Mammary epithelial cell (primary cell): ENCODE measurements at regions of chr15 and their contacts with region 1.

Region 1: GRCh38 chr15:89750560-89751542 is at the start of gene MESP1:
- DNase-seq: peak; percentile 85
- H3K4me3 ChIP-seq: peak within 1 kb of the TSS; percentile 44 to 65 (median 58)
- H3K27ac ChIP-seq: no peak within 1 kb of the TSS
- H3K4me1 ChIP-seq: peaks cover 16% of the 10 kb centered on the region
- H3K27me3 ChIP-seq: no peaks in the 10 kb centered on the region
- CTCF ChIP-seq: peak; percentile 42 to 79
- total RNA-seq, gene MESP1: under 0.01 TPM in 1 of 2 donors, not detected in the other

Region 2: DNA sequence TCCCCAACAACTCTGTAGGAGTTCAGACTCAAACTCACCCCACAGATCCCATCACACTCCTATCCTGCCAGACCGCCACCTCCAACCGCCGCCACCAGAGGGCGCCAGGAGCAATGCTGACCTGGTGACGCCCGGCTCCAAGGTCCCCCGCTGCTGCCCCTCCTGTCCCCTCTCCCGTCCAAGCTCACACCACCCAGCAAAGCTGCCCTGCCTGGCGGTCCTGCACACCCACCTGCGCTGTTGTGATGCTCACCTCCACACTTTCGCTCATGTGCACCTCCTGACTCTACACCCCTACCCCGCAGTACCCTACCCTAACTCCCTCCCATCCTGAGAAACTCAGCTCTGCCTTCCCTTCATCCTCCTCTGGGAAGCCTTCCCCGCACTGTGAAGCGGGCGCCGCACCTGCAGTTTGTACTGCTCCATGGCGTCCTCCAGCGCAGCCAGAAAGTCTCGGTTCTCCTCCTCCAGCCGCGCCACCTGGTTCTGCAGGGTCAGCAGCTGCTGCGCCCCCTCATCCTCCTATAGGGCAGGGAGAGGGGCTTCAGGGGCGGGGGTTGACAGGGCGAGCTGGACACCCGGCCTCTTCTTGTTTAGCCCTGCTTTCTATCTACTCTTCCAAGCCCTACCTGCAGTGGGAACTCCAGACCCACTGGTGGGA is 103.5 kb before region 1 on chr15:
- CTCF ChIA-PET with region 1: no interaction called
- dilution Hi-C with region 1: no loop called
- in situ Hi-C with region 1: no loop called
- intact Hi-C with region 1: loop called (anchors 1 kb)
- DNase-seq: peak; percentile 23
- H3K4me3 ChIP-seq: no peak overlapping the region
- H3K27ac ChIP-seq: no peak overlapping the region
- H3K4me1 ChIP-seq: no peaks in the 10 kb centered on the region
- H3K27me3 ChIP-seq: no peaks in the 10 kb centered on the region
- CTCF ChIP-seq: peak; percentile 80 to 92

Region 3: DNA sequence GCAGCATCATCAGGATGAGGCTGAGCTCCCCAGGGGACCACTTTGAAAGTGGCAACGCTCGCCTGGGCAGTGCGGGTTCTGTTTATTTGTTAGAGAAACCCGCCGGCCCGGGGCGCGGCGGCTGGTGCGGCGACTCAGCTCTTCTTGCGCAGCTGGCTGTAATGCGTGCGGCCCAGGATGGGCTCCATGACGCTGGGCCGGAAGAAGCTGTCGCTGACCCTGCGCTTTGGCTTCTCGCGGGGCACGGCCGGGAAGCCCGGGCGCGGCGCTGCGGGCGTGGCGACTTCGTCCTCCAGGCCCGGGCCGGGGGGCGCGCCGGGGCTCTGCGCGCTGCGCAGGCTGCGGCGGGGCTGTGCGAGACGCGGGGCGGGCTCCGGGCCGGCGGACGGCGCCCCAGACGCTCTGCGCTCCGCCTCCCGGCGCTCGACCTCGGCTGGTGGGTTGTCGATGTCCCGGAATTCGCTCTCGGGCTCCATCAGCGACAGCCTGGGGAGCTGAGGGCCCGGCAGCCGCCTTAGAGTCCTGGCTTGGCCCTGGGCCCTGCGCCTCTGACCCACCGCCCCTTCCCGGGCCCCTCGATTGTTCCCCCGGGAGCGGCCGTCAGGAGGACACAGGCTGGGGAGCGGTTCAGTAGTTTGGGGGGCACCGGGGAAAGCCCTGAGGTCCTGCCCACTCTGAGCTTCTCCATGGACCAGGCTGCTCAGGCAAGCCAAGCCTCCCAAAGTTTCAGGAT is 85.2 kb before region 1 on chr15:
- CTCF ChIA-PET with region 1: no interaction called
- dilution Hi-C with region 1: no loop called
- in situ Hi-C with region 1: no loop called
- intact Hi-C with region 1: no loop called
- DNase-seq: no peak
- H3K4me3 ChIP-seq: peak overlapping the region in 2 of 3 experiments; percentile 26 to 35
- H3K27ac ChIP-seq: no peak overlapping the region
- H3K4me1 ChIP-seq: peaks cover 24% of the 10 kb centered on the region
- H3K27me3 ChIP-seq: no peaks in the 10 kb centered on the region
- CTCF ChIP-seq: no peak

Region 4: GRCh38 chr15:89690276-89691218 is 60.3 kb before region 1 on chr15 and contains the starts of genes PEX11A and WDR93:
- CTCF ChIA-PET with region 1: no interaction called
- dilution Hi-C with region 1: no loop called
- in situ Hi-C with region 1: no loop called
- intact Hi-C with region 1: no loop called
- DNase-seq: peak; percentile 76
- H3K4me3 ChIP-seq: peak within 1 kb of the TSS; percentile 78 to 82 (median 81)
- H3K27ac ChIP-seq: peak within 1 kb of the TSS; percentile 21
- H3K4me1 ChIP-seq: no peaks in the 10 kb centered on the region
- H3K27me3 ChIP-seq: no peaks in the 10 kb centered on the region
- CTCF ChIP-seq: no peak
- total RNA-seq, gene PEX11A: 4.3 to 7.3 TPM
- total RNA-seq, gene WDR93: 0.17 TPM in 1 of 2 donors, not detected in the other

Region 5: DNA sequence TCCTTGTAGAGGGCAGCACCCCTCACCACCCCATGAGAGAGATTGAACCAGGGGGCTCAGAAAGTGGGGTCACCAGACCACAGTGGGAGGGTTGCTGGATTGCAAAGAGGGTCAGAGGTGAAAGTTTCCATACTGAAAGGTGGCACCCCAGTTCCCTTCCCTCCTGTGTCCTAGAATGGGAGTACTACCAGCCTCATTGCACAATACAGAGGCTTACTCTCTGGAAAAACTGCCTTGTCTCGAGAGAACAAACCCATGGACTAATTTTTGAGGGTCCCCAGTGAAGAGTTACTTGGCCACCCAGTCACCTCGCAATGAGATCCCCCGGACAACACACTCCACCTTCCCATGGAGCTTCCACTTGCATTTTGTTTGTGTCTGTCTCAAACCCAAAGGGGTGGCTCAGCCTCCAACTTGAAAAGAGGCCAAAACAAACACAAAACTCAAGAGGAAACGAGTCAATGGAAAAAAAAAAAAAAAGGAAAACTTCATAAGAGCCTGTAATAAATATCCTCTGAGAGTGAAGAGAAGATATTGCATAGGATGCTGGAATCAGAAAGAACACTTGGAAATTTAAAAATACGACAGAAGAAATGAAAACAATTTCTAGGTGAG is 43.9 kb after region 1 on chr15:
- CTCF ChIA-PET with region 1: no interaction called
- dilution Hi-C with region 1: loop called (anchors 5 kb)
- in situ Hi-C with region 1: no loop called
- intact Hi-C with region 1: no loop called
- DNase-seq: no peak
- H3K4me3 ChIP-seq: no peak overlapping the region
- H3K27ac ChIP-seq: no peak overlapping the region
- H3K4me1 ChIP-seq: peaks cover 2% of the 10 kb centered on the region
- H3K27me3 ChIP-seq: no peaks in the 10 kb centered on the region
- CTCF ChIP-seq: no peak

Region 6: DNA sequence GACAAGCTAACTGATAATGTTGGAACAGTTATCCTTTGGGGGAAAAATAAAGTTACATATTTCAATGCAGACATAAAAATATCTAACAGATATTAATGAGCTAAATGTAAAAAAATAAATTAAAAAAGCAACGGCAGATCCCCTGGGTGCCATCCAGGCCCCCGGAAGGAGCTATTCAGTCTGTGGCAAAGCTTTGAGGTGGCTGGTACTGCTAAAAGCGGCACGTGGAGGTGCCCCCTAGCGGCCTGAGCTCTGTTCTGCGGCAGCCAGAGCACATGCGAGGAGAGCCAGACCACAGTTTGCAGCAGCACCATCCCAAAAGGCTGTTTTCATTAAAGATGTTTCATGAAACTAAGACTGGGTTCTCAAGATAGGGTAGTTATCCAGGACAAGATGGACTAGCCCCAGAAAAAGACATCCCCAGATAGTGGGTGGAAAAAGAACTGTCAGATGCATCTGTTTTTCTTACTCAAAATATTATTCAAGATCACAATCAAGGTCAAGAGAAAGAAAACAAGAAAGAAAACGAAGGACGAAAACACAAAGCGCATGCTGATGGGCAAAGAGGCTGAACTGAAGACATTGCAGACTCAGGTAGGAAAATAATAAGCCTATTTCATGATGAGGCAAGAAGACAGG is 124.2 kb after region 1 on chr15:
- CTCF ChIA-PET with region 1: no interaction called
- dilution Hi-C with region 1: no loop called
- in situ Hi-C with region 1: loop called in 1 of 2 experiments (anchors 5 kb)
- intact Hi-C with region 1: no loop called
- DNase-seq: peak; percentile 50
- H3K4me3 ChIP-seq: no peak overlapping the region
- H3K27ac ChIP-seq: no peak overlapping the region
- H3K4me1 ChIP-seq: no peaks in the 10 kb centered on the region
- H3K27me3 ChIP-seq: no peaks in the 10 kb centered on the region
- CTCF ChIP-seq: peak; percentile 90 to 98